CD14-positive monocyte (primary cell): ENCODE measurements at regions of chr15 and their contacts with region 1.

Region 1: GRCh38 chr15:34223904-34224596 is 766 bp upstream of the EMC4 start:
- DNase-seq: peak; percentile 4 to 7 (median 6)
- H3K4me3 ChIP-seq: peak overlapping the region; percentile 78 to 100 (median 93)
- H3K4me3 Mint-ChIP-seq: peak overlapping the region; percentile 94 to 96
- H3K27ac ChIP-seq: peak overlapping the region; percentile 72 to 99
- H3K27ac Mint-ChIP-seq: peak overlapping the region; percentile 95 to 99 (median 96)
- H3K4me1 ChIP-seq: peaks cover 16 to 19% of the 10 kb centered on the region in 2 donors
- H3K4me1 Mint-ChIP-seq: peaks cover 18% of the 10 kb centered on the region
- H3K27me3 ChIP-seq: no peaks in the 10 kb centered on the region
- H3K27me3 Mint-ChIP-seq: peaks cover 0 to 1% (median 0%) of the 10 kb centered on the region in 3 donors
- CTCF ChIP-seq: no peak

Region 2: DNA sequence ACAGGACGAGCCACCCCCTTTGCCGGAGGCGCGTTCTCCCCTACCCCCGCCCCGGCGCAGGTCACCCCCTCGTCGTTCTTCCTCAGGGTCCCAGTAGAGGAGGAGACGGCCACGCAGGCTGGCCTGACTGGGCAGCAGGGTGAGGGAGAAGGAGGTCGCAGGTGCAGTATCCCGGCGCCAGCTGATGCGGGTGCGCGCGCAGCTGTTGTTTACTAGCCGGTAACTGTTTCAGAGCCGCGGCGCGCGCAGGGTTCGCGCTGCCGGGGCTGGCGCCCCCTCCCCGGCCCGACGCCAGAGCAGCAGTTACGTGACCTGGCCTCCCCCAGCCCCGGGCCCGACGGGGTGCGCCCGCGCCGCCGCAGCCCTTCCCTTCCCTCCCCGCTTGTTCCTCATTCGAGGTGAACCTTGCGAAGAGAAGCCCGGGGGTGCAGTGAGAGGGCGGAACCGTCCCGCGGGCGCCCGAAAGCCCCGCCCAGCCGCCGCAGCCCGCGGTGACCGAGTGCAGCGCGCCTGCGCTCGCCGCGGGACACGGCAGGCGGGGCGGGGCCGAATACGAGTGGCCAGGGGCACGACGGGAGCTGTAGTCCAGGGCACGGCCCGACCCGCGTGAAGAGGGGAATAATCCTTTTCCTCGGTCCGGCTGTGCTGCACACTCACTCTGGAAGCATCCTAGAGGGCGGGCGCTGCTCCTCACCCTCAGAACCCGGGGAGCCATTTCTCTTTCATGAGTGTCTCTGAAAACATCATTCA is 113.7 kb after region 1 on chr15 and contains the start of gene SLC12A6:
- intact Hi-C with region 1: loop called (anchors 5 to 10 kb)
- DNase-seq: peak; percentile 92 to 95 (median 93)
- H3K4me3 ChIP-seq: peak within 1 kb of the TSS; percentile 75 to 99 (median 93)
- H3K4me3 Mint-ChIP-seq: peak within 1 kb of the TSS; percentile 93 to 98
- H3K27ac ChIP-seq: peak within 1 kb of the TSS; percentile 90 to 98
- H3K27ac Mint-ChIP-seq: peak within 1 kb of the TSS; percentile 94 to 99 (median 97)
- H3K4me1 ChIP-seq: peaks cover 57 to 70% of the 10 kb centered on the region in 2 donors
- H3K4me1 Mint-ChIP-seq: peaks cover 55% of the 10 kb centered on the region
- H3K27me3 ChIP-seq: no peaks in the 10 kb centered on the region
- H3K27me3 Mint-ChIP-seq: peaks cover 0 to 2% (median 0%) of the 10 kb centered on the region in 3 donors
- CTCF ChIP-seq: no peak
- polyA plus RNA-seq, gene SLC12A6: 5.4 to 80.0 (median 8.0) TPM